Calu3 (cell line): ENCODE measurements at regions of chr6 and their contacts with region 1.

Region 1: DNA sequence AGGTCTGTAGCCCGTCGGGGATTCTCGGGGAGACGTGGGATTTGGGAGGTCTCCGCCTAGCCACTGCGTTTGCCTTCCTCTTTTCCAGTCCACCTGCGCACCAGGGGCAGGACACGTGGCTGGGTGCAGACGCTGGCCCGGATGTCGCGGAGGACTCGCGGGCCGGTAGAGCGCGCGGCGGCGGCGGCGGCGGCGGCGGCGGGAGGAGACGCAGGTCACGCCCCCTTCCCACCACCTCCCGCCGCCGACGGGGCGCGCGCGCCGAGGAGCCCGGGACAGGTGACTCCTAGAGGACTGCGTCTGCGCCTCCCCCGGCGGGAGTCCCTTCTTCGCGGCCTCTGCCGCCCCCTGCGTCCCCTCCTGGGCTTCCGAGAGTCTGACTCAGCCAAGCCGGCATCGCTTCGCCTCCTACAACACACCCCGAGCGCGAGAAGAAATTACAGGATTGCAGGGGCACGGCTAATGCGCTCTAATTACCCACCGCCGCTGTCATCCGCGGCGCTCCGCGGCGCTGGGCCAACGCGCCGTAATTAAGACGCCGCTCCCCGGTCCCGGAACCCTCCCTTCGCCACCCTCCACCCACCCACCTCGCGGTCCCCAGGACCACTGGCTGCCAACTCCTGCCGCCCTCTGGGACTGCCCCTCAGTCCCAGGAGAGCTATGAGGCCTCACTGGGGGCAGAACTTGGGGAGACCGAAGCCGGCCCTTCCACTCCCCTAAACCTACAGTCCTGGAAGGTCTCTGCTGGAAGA is 124.5 kb downstream of the MRPL14 start:
- DNase-seq: peak; percentile 97
- H3K4me3 Mint-ChIP-seq: peak overlapping the region; percentile 78
- H3K27ac Mint-ChIP-seq: peak overlapping the region; percentile 96
- H3K4me1 Mint-ChIP-seq: peaks cover 70% of the 10 kb centered on the region
- H3K27me3 Mint-ChIP-seq: no peaks in the 10 kb centered on the region
- CTCF ChIP-seq: peak; percentile 10

Region 2: DNA sequence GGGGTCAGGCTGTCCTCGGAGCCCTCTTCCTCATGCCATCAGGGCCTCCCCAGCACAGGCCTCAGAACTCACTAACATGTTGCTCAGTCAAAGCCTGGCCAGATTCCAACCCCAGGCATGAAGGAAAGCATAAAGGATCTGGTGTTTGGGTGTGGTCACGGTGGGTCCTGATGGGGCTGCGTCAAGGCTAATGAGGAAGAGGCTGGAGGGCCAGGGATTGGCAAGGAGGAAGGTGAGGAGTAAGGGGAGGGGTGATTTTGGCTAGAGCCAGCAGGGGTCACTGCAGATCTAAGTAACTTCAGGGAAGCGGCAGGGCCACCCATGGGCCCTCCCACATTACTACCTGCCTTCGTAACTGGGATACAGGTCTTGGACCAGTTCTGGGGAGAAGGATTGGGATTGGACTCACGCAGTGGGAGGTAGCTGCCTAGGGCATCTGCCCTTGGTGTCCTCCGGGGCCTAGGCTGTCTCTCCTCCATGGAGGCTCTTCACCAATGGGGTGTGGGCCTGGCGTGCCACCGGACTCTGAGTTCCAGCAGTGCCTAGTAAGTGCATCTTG is 279.0 kb before region 1 on chr6:
- CTCF ChIA-PET with region 1: interaction called, 12 read pairs
- intact Hi-C with region 1: loop called (anchors 2 kb)
- DNase-seq: peak; percentile 95
- H3K4me3 Mint-ChIP-seq: peak overlapping the region; percentile 50
- H3K27ac Mint-ChIP-seq: peak overlapping the region; percentile 97
- H3K4me1 Mint-ChIP-seq: peaks cover 52% of the 10 kb centered on the region
- H3K27me3 Mint-ChIP-seq: peaks cover 10% of the 10 kb centered on the region
- CTCF ChIP-seq: peak; percentile 89

Region 3: GRCh38 chr6:43774776-43775534 is 227.8 kb before region 1 on chr6:
- CTCF ChIA-PET with region 1: interaction called, 9 read pairs
- intact Hi-C with region 1: loop called (anchors 2 kb)
- DNase-seq: peak; percentile 88
- H3K4me3 Mint-ChIP-seq: peak overlapping the region; percentile 87
- H3K27ac Mint-ChIP-seq: peak overlapping the region; percentile 85
- H3K4me1 Mint-ChIP-seq: peaks cover 45% of the 10 kb centered on the region
- H3K27me3 Mint-ChIP-seq: no peaks in the 10 kb centered on the region
- CTCF ChIP-seq: peak; percentile 98

Region 4: DNA sequence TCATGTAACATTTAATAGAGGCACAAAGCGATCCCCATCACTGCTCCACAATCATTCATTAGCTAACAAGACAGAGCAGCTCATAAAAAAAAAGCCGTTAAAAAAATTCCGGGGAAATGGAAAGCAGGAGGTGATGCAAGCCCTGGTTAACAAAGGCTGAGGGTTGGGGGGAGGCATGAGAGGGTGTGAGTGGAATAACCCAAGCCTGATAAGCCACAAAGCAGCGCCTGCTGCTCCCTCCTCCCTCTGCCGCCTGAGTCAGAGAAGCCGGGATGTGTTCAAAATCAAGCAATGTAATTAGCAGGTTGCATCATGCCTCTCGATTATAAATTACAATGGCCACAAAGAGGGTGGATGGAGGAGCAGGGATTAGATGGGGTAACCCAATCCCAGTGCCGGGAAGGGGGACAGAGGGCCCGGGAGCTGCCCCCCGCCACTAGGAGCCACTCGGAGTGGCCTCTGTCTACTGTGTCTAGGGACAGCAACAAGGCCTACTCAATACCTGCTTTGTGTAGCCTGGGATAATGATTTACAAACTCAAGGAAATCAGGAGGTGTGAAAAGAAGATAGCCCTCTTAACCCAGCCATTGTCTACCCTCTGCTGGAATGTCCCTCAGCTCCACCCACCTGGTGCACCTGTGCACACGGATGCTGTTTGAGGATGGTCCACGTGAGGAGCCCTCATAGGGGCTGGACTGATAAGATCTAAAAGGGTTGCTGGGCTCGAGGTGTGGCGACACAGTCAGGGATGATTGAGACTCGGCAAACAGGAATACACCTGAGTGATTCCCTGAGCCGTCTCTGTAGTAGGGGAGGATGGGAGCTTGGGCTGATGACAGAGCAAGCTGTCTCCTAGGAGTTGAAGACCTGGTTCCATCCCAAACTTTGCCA is 75.9 kb before region 1 on chr6:
- CTCF ChIA-PET with region 1: interaction called, 60 read pairs
- intact Hi-C with region 1: loop called (anchors 1 kb)
- DNase-seq: peak; percentile 98
- H3K4me3 Mint-ChIP-seq: peak overlapping the region; percentile 41
- H3K27ac Mint-ChIP-seq: peak overlapping the region; percentile 97
- H3K4me1 Mint-ChIP-seq: peaks cover 36% of the 10 kb centered on the region
- H3K27me3 Mint-ChIP-seq: no peaks in the 10 kb centered on the region
- CTCF ChIP-seq: no peak

Region 5: DNA sequence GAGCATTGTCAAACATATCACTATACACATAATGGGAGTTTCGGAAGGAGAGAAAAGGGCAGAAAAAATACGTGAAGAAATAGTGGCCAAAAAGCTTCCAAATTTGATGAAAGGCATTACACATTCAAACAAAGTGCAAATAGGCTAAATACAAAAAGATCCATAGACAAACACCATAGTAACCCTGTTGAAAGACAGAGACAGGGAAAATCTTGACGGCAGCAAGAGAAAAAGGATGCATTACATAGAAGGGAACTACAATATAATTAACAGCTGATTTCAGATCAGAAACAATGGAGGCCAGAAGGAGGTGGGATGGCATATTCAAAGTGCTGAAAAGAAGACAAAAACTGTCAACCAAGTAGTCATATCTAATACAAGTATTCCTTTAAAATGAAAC is 46.3 kb before region 1 on chr6:
- CTCF ChIA-PET with region 1: interaction called, 5 read pairs
- intact Hi-C with region 1: loop called (anchors 1 kb)
- DNase-seq: no peak
- H3K4me3 Mint-ChIP-seq: no peak overlapping the region
- H3K27ac Mint-ChIP-seq: no peak overlapping the region
- H3K4me1 Mint-ChIP-seq: peaks cover 18% of the 10 kb centered on the region
- H3K27me3 Mint-ChIP-seq: no peaks in the 10 kb centered on the region
- CTCF ChIP-seq: no peak

Region 6: GRCh38 chr6:44058617-44059358 is 56.0 kb after region 1 on chr6:
- CTCF ChIA-PET with region 1: interaction called, 6 read pairs
- intact Hi-C with region 1: loop called (anchors 5 kb)
- DNase-seq: peak; percentile 94
- H3K4me3 Mint-ChIP-seq: peak overlapping the region; percentile 54
- H3K27ac Mint-ChIP-seq: peak overlapping the region; percentile 98
- H3K4me1 Mint-ChIP-seq: peaks cover 60% of the 10 kb centered on the region
- H3K27me3 Mint-ChIP-seq: no peaks in the 10 kb centered on the region
- CTCF ChIP-seq: no peak

Region 7: DNA sequence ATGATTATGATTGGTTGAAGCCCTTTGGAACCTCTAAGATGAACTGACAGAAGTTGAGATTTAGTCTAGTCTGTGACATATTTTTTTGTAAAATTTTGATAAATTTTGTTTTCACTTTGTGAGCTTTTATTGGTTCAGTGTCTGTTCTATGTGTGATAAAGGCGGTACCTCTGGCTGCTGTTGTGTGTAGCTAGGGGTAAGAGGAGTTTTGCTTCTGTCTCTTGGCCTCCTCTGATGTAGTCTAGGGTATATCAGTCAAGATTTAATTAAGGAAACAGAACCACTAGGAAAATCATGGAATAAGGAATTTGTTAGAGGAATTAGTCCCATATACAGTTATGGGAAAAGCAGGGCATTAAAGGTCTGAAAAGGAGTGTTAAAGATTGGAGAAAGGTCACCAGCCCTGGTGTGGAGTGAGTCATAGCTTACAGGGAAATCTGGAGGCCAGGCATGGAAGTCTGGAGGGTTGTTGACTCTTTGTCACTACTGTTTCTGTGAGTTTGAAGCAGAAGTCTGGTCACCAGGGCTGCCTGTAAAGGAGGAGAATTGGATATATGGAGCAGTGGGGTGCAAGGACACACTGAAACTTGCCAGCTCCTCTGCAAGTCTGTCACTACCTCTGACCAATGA is 413.2 kb after region 1 on chr6:
- CTCF ChIA-PET with region 1: no interaction called
- intact Hi-C with region 1: no loop called
- DNase-seq: peak; percentile 38
- H3K4me3 Mint-ChIP-seq: no peak overlapping the region
- H3K27ac Mint-ChIP-seq: peak overlapping the region; percentile 35
- H3K4me1 Mint-ChIP-seq: peaks cover 23% of the 10 kb centered on the region
- H3K27me3 Mint-ChIP-seq: no peaks in the 10 kb centered on the region
- CTCF ChIP-seq: no peak